Sciatic nerve (tissue), 2 donors: ENCODE measurements at regions of chr1 and their contacts with region 1.

Region 1: DNA sequence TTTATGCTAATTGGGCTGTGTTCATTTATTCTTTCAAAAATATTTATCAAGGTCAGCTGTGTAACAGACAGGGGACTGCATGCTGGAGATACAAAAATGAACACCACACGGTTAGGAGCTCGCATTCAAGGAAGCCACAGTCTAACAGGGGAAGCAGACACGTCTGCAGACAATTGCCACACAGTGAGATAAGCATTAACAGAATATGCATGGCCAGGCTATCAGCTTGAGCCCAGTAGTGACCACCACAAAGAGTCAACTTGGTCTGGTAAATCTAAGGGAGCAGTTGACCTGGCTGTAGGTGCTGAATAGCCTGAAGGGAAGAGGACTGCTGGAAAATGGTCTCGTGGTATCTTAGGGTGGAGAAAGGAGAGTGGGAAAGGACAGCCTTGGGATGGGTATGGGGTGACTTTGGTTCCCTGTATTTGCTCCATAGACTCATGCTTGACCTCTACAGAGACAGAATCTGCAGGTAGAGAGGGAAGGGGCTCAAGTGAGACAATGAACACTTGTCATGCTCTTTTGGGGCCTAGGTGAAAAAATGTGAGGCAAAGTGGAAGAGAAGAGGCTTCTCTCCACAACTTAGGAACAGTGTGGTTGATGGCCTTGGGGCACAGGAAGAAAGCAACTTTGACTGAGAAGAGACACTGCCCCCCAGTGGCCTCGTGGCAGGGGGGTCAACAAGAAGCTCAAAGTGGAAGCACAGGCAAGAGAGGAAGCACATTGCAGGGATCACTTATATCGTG is 7.6 kb upstream of the NPL start:
- DNase-seq: peak; percentile 83
- ATAC-seq: peak; percentile 77

Region 2: GRCh38 chr1:182588500-182589452 is 193.2 kb before region 1 on chr1 and contains the start of gene RNASEL:
- intact Hi-C with region 1: no loop called
- DNase-seq: peak; percentile 88
- ATAC-seq: peak; percentile 96
- total RNA-seq, gene RNASEL: 11.6 TPM

Region 3: GRCh38 chr1:182601416-182601786 is 180.6 kb before region 1 on chr1:
- intact Hi-C with region 1: loop called (anchors 2 kb)
- DNase-seq: peak; percentile 78
- ATAC-seq: peak; percentile 34

Region 4: DNA sequence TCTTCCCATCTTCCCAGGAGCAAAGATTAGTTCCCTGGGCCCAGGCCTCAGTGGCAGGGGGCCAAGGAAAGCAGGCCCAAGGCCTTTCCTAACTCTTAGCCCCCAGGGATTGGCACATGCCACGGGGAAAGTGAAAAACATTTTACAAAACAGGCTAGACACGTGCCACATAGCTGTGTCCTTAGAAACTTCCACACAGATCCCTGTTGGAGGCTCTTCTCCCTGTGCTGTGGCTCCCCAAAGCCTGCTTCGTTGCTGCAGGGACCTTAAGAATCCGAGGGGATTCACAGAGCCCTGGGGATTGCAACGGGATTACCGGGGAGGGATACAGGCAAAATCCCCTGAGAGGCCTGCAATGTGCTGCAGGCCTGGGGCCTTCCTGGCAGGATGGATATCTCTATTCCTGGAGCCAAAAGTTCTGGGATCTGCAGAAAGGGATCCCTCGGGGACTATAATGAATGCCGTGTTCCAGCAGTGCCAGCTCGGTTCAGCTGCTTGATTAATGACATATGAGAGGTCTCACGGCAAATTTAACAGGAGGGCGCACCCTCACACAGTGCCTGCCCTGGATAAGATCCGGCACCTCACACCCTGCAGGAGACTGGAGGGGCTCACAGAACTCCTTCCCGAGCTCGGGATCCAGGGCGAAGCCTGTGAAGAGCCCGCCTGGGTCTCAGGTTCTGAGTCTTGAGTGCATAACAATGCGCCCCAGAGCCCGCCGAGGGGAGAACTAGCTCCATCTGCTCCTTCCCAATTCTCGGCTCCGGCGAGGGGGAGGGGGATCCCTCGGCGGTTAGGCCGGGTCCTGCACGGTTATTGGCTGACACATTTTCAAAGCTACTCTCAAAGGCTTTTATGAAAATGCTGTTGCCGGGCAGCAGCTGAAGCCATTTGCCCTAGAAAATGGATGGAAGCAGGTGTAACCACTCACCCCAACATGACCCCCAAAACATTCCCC is 82.3 kb before region 1 on chr1:
- intact Hi-C with region 1: no loop called
- DNase-seq: peak; percentile 66
- ATAC-seq: peak; percentile 89